ENCODE measurements at regions of chr3 and their contacts with region 1.

Region 1: DNA sequence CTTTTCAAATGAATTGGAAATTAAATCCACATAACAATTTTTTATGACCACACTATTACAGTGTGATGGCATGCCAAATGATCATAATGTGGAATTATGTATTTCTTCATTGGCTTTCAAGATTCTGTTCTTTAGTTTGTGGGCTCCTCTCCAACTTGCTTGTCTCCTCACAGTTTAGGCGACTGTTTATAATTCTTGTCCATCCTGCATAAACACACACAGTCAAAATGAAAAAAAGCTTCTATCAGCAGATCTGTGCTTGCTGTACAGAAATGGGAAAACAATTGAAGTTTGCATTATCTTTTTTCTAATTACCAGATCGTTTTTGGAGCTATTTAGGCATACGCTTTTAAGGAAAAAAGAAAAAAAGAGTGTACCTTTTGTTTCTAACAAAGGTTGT is 37.0 kb downstream of the OPA1 start:
- DNase-seq: no peak
- H3K4me3 ChIP-seq: no peak overlapping the region
- H3K27ac ChIP-seq: no peak overlapping the region
- H3K4me1 ChIP-seq: peaks cover 2% of the 10 kb centered on the region
- H3K27me3 ChIP-seq: no peaks in the 10 kb centered on the region
- CTCF ChIP-seq: no peak

Region 2: GRCh38 chr3:193545304-193545703 is 84.7 kb before region 1 on chr3:
- CTCF ChIA-PET with region 1: no interaction called
- POLR2A ChIA-PET with region 1: interaction called, 14 read pairs
- intact Hi-C with region 1: no loop called
- DNase-seq: no peak
- H3K4me3 ChIP-seq: no peak overlapping the region
- H3K27ac ChIP-seq: no peak overlapping the region
- H3K4me1 ChIP-seq: peaks cover 12% of the 10 kb centered on the region
- H3K27me3 ChIP-seq: no peaks in the 10 kb centered on the region
- CTCF ChIP-seq: no peak

Measured in A673 (cell line).